Calu3 (cell line): ENCODE measurements at regions of chr7 and their contacts with region 1.

Region 1: DNA sequence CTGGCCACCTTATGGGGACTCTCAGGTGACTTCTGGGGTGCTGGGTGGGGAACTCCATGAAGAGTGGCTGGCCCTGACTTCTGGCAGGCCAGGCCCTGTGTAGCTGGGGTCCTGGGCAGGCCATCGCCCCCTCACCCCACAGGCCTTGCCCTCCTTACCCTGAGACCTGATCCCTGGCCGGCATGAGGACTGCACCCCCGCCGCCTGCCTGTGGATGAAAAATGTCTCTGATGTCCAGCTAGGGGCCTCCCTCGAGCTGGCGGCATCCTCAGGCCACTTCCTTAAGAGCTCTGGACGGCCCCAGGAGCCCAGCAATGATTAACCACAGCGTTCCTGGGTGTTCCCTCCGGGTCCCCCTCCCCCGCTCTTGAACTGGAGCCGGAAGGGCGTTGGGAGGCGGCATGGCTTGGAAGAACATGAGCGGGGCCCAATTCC is 31.8 kb upstream of the SHH start:
- DNase-seq: peak; percentile 96
- H3K4me3 Mint-ChIP-seq: no peak overlapping the region
- H3K27ac Mint-ChIP-seq: peak overlapping the region; percentile 58
- H3K4me1 Mint-ChIP-seq: peaks cover 12% of the 10 kb centered on the region
- H3K27me3 Mint-ChIP-seq: no peaks in the 10 kb centered on the region
- CTCF ChIP-seq: no peak

Region 2: GRCh38 chr7:155860840-155861479 is 16.9 kb after region 1 on chr7:
- CTCF ChIA-PET with region 1: interaction called, 11 read pairs
- intact Hi-C with region 1: no loop called
- DNase-seq: peak; percentile 88
- H3K4me3 Mint-ChIP-seq: peak overlapping the region; percentile 6
- H3K27ac Mint-ChIP-seq: peak overlapping the region; percentile 34
- H3K4me1 Mint-ChIP-seq: peaks cover 21% of the 10 kb centered on the region
- H3K27me3 Mint-ChIP-seq: peaks cover 19% of the 10 kb centered on the region
- CTCF ChIP-seq: no peak

Region 3: DNA sequence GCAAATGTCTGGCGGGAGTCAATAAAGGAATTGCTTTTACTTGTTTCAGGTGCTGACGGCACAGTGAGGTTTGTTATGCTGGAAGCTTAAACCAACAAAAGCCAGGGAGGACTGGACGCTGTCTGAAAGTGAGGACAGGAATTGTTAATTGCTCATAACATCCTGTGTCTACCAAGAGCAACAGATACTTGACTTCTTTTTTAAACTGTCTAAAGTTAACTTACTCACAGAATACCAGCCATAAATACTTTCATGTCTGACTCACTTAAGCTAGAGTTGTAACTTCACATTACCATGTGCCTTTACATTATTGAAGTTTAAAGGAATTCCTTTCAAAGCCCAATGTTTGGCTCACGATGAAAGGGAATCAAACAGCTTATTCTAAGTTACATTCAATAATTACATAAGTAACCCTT is 220.9 kb after region 1 on chr7:
- CTCF ChIA-PET with region 1: no interaction called
- intact Hi-C with region 1: no loop called
- DNase-seq: no peak
- H3K4me3 Mint-ChIP-seq: no peak overlapping the region
- H3K27ac Mint-ChIP-seq: no peak overlapping the region
- H3K4me1 Mint-ChIP-seq: peaks cover 15% of the 10 kb centered on the region
- H3K27me3 Mint-ChIP-seq: peaks cover 55% of the 10 kb centered on the region
- CTCF ChIP-seq: no peak

Region 4: DNA sequence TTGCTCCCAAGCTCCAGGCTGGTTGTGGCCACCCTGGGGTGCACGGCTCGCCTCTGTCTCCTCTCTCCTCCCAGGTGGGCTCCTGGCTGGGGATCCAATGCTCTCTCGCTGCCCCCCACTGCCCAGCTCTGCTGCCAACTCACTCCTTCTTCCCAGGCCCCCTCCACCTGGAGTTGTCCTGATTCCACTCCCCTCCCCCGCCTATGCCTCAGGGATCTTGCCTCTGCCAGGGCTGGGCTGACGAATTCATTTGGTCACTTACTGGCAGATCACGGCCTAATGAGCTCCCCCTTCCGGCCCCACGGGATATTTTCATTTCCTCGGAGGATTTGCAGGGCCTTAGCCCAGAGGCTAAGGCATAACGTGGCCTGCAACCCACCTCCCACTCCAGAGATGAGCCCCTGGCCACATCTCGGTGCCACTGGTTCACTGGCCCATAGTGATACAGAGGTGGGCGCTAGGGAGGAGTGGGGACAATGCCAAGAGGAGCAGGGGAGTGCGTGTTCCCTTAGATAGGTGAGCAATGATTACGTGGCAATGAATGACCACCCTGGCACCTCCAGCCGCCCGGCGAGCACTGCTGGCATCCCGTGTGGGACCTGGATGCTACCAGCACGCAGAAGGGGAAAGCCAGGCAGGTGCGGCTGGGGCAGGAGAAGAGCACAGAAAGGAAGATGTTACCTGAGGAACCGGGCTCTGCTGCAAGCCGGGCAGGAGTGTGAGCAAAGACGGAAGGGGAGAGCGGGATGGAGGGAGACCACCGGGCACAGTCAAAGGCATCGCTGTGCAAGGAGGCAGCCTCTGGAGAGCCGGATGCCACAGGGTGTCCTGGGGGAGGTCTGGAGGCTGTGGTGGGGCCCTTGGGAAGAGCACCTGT is 312.9 kb after region 1 on chr7:
- CTCF ChIA-PET with region 1: no interaction called
- intact Hi-C with region 1: loop called (anchors 5 kb)
- DNase-seq: peak; percentile 64
- H3K4me3 Mint-ChIP-seq: no peak overlapping the region
- H3K27ac Mint-ChIP-seq: no peak overlapping the region
- H3K4me1 Mint-ChIP-seq: peaks cover 25% of the 10 kb centered on the region
- H3K27me3 Mint-ChIP-seq: no peaks in the 10 kb centered on the region
- CTCF ChIP-seq: peak; percentile 42